SK-MEL-5 (cell line): ENCODE measurements at regions of chr10 and their contacts with region 1.

Region 1: GRCh38 chr10:100878291-100878910 is 34.4 kb upstream of the SLF2 start:
- DNase-seq: peak; percentile 81

Region 2: DNA sequence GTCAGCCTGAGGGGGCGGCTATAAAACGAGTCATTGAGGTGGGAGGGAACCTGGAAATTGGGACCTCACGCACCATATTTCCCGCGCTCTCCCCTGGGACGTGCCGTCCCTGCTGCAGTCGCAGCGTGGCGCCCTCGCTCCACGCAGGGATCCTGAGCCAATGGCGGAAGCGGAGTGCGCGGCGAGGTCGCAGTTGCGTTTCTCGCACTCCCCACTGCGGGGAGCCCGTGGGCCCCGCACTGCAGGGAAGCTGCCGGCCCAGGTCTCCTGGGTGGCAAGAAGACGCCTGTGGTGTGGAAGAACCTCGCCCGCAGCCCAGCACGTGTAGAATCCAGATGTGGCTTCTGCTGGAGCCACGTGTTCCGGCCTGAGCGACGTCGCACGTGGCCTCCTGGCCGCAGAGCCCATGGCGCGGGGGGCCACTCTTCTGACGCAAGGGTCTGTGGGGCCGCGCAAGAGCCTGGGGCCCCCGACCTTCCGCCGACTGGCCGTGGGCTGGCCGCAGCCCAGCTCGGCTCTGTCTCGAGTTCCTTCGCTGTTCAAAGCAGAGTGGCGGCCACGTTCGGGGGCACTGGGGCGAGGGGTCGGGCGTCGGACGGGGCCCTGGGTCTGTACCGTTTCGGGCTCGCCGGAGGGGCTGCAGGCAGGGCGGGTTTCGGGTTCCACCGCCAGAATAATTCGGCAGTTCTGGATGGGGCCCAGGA is 316.2 kb before region 1 on chr10:
- in situ Hi-C with region 1: loop called (anchors 25 kb)
- DNase-seq: peak; percentile 73